Transverse colon (tissue), 4 donors: ENCODE measurements at regions of chr1 and their contacts with region 1.

Region 1: DNA sequence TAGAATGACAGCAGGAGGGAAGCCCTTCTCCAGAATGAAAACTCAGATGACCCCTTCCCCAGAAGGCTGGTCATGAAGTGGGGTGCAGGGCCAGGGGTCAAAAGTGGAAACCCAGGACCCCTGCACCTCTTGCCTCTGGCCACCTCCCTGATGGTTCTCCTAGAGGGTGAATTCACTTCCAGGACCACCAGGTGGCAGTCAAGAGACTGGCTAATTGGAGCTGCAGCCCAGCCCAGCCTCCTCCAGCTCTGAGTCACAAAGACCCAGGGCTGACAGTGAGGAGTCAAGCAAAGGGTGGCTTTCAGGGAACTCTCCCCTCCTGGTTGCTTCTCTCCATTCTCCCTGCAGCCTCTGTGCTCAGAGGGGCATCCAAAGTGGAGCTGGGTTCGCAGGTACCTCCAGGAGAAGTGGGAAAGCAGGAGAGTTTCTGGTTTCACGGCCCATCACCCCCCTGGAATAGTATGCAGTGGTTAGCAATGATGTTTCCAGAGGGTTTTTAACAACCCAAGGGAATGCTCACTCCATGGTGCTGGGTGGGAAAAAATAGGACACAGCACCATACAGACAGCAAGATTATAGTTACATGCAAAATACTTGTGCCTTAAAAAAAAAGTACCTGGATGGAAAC is 6.1 kb upstream of the EPHB2 start:
- DNase-seq: peak; percentile 90
- H3K4me3 ChIP-seq: no peak overlapping the region
- H3K27ac ChIP-seq: peak overlapping the region; percentile 76 to 79 (median 78)
- H3K4me1 ChIP-seq: peaks cover 0 to 31% (median 18%) of the 10 kb centered on the region in 4 donors
- H3K27me3 ChIP-seq: no peaks in the 10 kb centered on the region
- CTCF ChIP-seq: peak; percentile 91 to 93 (median 92)
- EP300 ChIP-seq: no peak
- POLR2A ChIP-seq: no peak

Region 2: DNA sequence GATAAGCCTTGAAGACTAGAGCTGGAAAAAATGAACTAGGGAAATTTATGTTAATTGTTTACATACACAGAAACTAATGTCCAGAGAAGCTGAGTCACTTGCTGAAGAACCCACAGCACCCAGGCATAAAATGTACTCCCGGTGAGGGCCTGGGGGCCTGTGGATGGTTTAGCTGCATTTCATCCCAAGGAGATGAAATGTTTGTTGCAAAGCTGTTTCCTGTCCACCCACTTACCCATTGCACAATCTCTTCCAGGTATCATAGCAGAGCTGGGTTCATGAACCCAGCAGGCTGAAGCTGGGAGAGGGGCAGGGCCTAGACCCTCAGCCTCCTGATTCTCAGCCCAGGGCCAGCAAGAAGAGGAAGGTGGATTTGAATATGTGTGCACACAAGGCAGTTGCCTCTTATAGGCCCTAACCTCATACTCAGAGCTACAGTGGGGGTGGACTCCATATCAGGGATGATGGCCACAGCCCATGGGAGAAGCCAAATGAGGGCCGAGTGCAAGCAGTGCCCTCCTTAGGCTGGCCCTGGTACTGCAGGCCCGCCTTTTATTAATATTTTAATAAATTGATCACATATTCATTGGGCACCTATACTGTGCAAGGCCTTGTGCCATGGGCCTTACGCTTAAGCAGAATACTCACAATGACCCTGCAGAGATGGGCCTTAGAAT is 157.3 kb after region 1 on chr1:
- in situ Hi-C with region 1: loop called in 1 of 4 experiments (anchors 25 kb)
- intact Hi-C with region 1: no loop called
- DNase-seq: peak; percentile 22
- H3K4me3 ChIP-seq: no peak overlapping the region
- H3K27ac ChIP-seq: no peak overlapping the region
- H3K4me1 ChIP-seq: no peaks in the 10 kb centered on the region
- H3K27me3 ChIP-seq: no peaks in the 10 kb centered on the region
- CTCF ChIP-seq: peak; percentile 62 to 83 (median 74)
- EP300 ChIP-seq: no peak
- POLR2A ChIP-seq: no peak

Region 3: DNA sequence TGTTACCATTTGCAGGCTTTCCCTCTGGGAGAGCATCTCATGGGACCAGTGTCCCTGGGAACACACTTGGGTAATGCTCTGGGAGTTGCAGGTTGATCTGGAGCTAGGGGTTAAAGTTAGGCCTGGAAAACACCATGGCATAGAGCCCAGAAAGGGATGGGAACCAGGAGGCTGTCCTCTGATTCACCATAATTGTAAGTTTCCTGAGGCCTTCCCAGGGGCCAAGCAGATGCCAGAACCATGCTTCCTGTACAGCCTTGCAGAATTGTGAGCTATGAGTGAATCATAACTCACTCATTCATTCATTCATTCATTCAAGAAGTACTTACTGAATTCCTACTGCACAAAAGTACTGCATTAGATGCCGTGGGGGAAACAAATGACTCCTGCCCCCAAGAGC is 218.1 kb after region 1 on chr1:
- in situ Hi-C with region 1: no loop called
- intact Hi-C with region 1: loop called (anchors 10 kb)
- DNase-seq: no peak
- H3K4me3 ChIP-seq: no peak overlapping the region
- H3K27ac ChIP-seq: no peak overlapping the region
- H3K4me1 ChIP-seq: no peaks in the 10 kb centered on the region
- H3K27me3 ChIP-seq: peaks cover 6% of the 10 kb centered on the region
- CTCF ChIP-seq: no peak
- EP300 ChIP-seq: no peak
- POLR2A ChIP-seq: no peak